PC-9 (cell line): ENCODE measurements at regions of chr9 and their contacts with region 1.

Region 1: DNA sequence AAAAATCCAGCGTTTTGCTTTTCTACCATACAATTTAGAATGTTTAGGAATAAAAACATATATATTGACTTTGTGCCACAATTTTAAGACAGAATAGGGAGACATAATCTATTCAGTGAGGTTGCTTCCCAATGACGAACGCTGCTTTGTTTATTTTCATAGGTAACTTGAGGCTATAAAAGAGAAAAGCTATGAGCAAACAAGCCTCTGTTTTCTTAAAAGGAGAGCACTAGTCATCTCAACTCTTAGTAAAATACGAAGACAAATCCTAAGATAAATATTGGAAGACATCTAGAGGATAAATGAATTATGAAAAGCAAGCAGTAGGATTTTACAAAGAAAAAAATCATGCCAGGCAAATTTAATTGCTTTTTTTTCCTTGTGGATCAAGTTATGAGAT is 363.6 kb downstream of the ANXA1 start:
- DNase-seq: no peak
- H3K4me3 ChIP-seq: no peak overlapping the region
- H3K27ac ChIP-seq: no peak overlapping the region
- H3K4me1 ChIP-seq: no peaks in the 10 kb centered on the region
- H3K27me3 ChIP-seq: no peaks in the 10 kb centered on the region
- CTCF ChIP-seq: no peak

Region 2: GRCh38 chr9:73451003-73451402 is 64.2 kb before region 1 on chr9:
- CTCF ChIA-PET with region 1: no interaction called
- POLR2A ChIA-PET with region 1: no interaction called
- intact Hi-C with region 1: loop called (anchors 10 kb)
- DNase-seq: no peak
- H3K4me3 ChIP-seq: no peak overlapping the region
- H3K27ac ChIP-seq: no peak overlapping the region
- H3K4me1 ChIP-seq: no peaks in the 10 kb centered on the region
- H3K27me3 ChIP-seq: no peaks in the 10 kb centered on the region
- CTCF ChIP-seq: no peak